ENCODE measurements at regions of chr19 and their contacts with region 1.

Region 1: DNA sequence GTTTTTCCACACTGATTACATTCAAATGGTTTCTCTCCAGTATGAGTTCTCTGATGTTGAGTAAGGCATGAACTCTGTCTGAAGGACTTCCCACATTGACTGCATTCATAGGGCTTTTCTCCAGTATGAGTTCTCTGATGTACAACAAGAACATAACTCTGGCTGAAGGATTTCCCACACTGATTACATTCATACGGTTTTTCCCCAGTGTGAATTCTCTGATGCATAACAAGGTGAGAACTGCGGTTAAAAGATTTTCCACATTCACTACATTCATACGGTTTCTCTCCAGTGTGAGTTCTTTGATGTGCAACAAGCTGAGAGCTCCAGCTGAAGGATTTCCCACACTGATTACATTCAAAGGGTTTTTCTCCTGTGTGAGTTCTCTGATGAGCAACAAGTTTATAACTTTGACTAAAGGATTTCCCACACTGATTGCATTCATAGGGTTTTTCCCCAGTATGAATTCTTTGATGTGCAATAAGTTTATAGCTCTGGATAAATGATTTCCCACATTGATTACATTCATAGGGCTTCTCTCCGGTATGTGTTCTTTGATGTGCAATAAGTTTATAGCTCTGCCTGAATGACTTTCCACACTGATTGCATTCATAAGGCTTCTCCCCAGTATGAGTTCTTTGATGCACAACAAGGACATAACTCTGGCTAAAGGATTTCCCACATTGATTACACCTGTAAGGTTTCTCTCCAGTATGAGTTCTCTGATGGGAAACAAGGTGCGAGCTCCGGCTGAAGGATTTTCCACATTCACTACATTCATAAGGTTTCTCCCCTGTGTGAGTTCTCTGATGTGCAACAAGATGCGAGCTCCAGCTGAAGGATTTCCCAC is 23.5 kb downstream of the ZNF180 start:
- DNase-seq: no peak
- ATAC-seq: no peak
- H3K4me3 Mint-ChIP-seq: no peak overlapping the region
- H3K27ac Mint-ChIP-seq: no peak overlapping the region
- H3K4me1 Mint-ChIP-seq: no peaks in the 10 kb centered on the region
- H3K27me3 Mint-ChIP-seq: no peaks in the 10 kb centered on the region

Region 2: GRCh38 chr19:43847884-43848283 is 628.9 kb before region 1 on chr19:
- CTCF ChIA-PET with region 1: no interaction called
- POLR2A ChIA-PET with region 1: no interaction called
- intact Hi-C with region 1: loop called in 1 of 2 experiments (anchors 10 kb)
- DNase-seq: no peak
- ATAC-seq: no peak
- H3K4me3 Mint-ChIP-seq: no peak overlapping the region
- H3K27ac Mint-ChIP-seq: no peak overlapping the region
- H3K4me1 Mint-ChIP-seq: no peaks in the 10 kb centered on the region
- H3K27me3 Mint-ChIP-seq: no peaks in the 10 kb centered on the region